ENCODE measurements at regions of chr6 and their contacts with region 1.

Region 1: DNA sequence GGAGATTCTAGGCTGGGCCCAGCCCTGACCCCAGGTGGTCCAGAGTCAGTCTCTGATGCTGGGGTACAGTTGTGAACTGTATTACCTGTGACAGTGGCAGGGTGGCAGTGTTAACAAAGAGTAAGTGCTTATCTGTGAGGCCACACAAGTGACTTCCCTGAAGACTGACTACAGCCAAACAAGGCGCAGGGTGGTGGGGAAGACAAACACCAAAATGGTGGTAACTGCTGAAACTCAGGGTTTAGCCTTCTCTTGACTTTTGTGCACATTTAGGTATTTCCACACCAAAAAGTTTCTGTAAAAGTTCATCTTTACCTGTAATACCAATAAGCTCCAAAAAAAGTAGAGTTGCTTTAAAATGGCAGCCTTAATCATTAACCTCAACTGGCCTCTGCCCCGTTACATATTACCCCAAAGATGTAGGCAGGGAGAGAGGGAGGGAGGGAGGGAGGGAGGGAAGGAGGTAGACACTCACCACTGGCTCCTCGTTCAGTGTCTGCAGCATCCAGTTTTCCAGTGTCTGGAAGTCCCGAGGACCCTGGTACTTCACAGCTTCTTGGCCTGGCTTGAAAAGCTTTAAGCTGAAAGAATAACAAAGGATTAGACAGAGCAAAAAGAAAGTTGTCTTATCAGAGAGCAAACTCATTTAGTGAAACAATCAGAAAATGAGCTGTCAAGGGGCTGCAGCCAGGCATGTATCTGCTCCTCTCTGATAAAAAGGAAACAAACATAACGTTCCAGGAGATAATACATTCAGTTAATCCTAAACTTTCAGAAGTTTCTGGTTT is 11.3 kb downstream of the TXNDC5 start:
- DNase-seq: no peak
- ATAC-seq: peak; percentile 61
- H3K4me3 Mint-ChIP-seq: no peak overlapping the region
- H3K27ac Mint-ChIP-seq: no peak overlapping the region
- H3K4me1 Mint-ChIP-seq: peaks cover 32% of the 10 kb centered on the region
- H3K27me3 Mint-ChIP-seq: no peaks in the 10 kb centered on the region
- CTCF ChIP-seq: no peak

Region 2: GRCh38 chr6:7992002-7992815 is 92.9 kb after region 1 on chr6:
- CTCF ChIA-PET with region 1: interaction called, 10 read pairs
- POLR2A ChIA-PET with region 1: no interaction called
- intact Hi-C with region 1: loop called (anchors 1 kb)
- DNase-seq: no peak
- ATAC-seq: peak; percentile 45
- H3K4me3 Mint-ChIP-seq: no peak overlapping the region
- H3K27ac Mint-ChIP-seq: no peak overlapping the region
- H3K4me1 Mint-ChIP-seq: peaks cover 8% of the 10 kb centered on the region
- H3K27me3 Mint-ChIP-seq: no peaks in the 10 kb centered on the region
- CTCF ChIP-seq: no peak

Region 3: GRCh38 chr6:8006208-8006607 is 106.9 kb after region 1 on chr6:
- CTCF ChIA-PET with region 1: interaction called, 5 read pairs
- POLR2A ChIA-PET with region 1: no interaction called
- intact Hi-C with region 1: loop called (anchors 1 kb)
- DNase-seq: no peak
- ATAC-seq: no peak
- H3K4me3 Mint-ChIP-seq: no peak overlapping the region
- H3K27ac Mint-ChIP-seq: no peak overlapping the region
- H3K4me1 Mint-ChIP-seq: no peaks in the 10 kb centered on the region
- H3K27me3 Mint-ChIP-seq: no peaks in the 10 kb centered on the region
- CTCF ChIP-seq: no peak

Region 4: GRCh38 chr6:8361259-8361658 is 462.0 kb after region 1 on chr6:
- CTCF ChIA-PET with region 1: no interaction called
- POLR2A ChIA-PET with region 1: no interaction called
- intact Hi-C with region 1: no loop called
- DNase-seq: no peak
- ATAC-seq: no peak
- H3K4me3 Mint-ChIP-seq: no peak overlapping the region
- H3K27ac Mint-ChIP-seq: no peak overlapping the region
- H3K4me1 Mint-ChIP-seq: no peaks in the 10 kb centered on the region
- H3K27me3 Mint-ChIP-seq: peaks cover 4% of the 10 kb centered on the region
- CTCF ChIP-seq: no peak